ENCODE measurements at regions of chr18 and their contacts with region 1.

Region 1: DNA sequence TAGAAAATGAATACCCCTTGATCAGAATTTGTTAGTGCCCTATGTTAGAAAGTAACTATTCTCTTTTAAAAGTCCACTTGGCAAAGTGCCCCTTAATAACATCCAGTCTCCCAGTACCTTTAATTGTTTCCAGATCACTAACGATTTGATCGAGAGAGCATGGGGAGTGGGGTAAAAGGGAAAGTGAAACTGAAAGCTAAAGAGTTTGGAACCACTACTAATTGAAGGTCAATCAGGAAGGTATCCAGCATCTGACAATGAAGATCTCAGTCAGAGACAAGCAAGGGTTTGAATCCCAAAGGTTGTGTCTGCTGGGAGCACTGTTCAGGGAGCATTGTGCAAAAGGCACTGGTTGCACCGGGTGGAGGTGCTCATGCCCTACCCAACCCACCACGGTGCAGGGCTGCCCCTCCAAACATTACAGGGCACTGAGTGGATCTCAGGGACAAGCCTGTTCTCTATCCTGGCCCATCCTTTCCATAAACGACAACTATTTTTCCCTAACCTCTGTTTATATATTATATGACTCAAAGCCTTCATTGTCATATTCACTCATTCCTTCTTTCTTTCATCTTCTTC is 14.6 kb upstream of the RIT2 start:
- DNase-seq: no peak
- H3K4me3 ChIP-seq: no peak overlapping the region
- CTCF ChIP-seq: no peak
- POLR2A ChIP-seq: no peak

Region 2: GRCh38 chr18:43180814-43181213 is 50.8 kb after region 1 on chr18:
- intact Hi-C with region 1: loop called (anchors 10 kb)
- DNase-seq: no peak
- H3K4me3 ChIP-seq: no peak overlapping the region
- CTCF ChIP-seq: no peak
- POLR2A ChIP-seq: no peak

Measured in lower leg skin (tissue), 4 donors.